WTC11 (cell line): ENCODE measurements at regions of chr2 and their contacts with region 1.

Region 1: DNA sequence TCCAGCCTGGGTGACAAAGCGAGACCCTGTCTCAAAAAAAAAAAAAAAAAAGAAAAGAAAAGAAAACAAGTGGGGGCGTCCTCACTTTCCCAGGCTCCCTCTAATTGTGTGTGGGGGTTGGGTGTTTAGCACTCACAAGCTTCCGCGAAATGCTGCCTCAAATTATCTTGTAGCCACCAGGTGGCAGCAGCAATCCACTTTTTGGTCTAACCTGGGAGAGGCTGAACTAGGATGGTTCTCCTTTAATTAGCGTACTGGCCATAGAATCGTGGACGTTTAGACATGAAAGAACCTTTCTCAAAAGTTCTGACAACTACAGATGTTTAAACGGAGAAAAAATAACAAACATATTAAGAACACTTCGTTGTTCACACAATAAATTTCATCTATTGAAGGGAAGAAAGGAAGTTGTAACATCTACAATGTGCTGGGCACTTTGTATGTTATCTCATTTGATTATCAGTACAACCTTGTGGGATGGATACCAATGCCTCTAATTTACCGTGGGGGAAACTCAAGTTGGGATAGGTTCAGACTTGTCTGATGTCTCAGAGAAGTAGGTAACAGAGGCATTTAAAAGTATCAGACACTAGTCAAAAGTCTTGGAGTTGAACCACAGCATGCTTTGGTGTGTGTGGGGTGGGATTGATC is 122.7 kb upstream of the NABP1 start:
- DNase-seq: peak; percentile 88
- ATAC-seq: peak; percentile 95
- H3K4me3 Mint-ChIP-seq: no peak overlapping the region
- H3K27ac Mint-ChIP-seq: no peak overlapping the region
- H3K4me1 Mint-ChIP-seq: peaks cover 19% of the 10 kb centered on the region
- H3K27me3 Mint-ChIP-seq: peaks cover 6% of the 10 kb centered on the region
- CTCF ChIP-seq: peak; percentile 38; the same call in 1 of the 2 replicates

Region 2: DNA sequence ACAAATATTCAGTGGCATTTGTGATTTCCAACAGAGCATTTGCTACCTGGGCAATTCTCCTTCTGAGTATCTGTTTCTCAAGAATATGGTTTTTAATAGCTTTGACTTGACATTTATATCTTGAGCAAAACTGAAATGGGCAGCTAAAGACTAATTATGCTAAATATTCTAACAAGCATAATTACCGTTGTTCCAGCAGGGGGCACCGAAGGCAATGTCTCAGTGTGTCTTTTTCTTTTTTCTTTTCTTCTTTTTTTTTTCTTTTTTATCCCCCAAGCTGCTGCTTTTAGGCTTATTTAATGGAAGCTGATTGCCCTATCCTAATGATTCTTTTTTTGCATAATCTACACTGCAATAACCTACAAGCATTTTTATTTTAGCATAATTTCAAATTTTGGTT is 16.1 kb before region 1 on chr2:
- CTCF ChIA-PET with region 1: interaction called, 44 read pairs
- POLR2A ChIA-PET with region 1: no interaction called
- DNase-seq: peak; percentile 41
- ATAC-seq: no peak
- H3K4me3 Mint-ChIP-seq: no peak overlapping the region
- H3K27ac Mint-ChIP-seq: no peak overlapping the region
- H3K4me1 Mint-ChIP-seq: peaks cover 25% of the 10 kb centered on the region
- H3K27me3 Mint-ChIP-seq: no peaks in the 10 kb centered on the region; the same call in 1 of the 2 replicates
- CTCF ChIP-seq: 0 out of 2 replicates have a peak, but pooled peaks have one; percentile 13

Region 3: GRCh38 chr2:191544461-191545062 is 10.7 kb before region 1 on chr2:
- CTCF ChIA-PET with region 1: interaction called, 44 read pairs
- POLR2A ChIA-PET with region 1: no interaction called
- DNase-seq: no peak
- ATAC-seq: no peak
- H3K4me3 Mint-ChIP-seq: no peak overlapping the region
- H3K27ac Mint-ChIP-seq: no peak overlapping the region
- H3K4me1 Mint-ChIP-seq: peaks cover 9% of the 10 kb centered on the region
- H3K27me3 Mint-ChIP-seq: no peaks in the 10 kb centered on the region
- CTCF ChIP-seq: no peak

Region 4: GRCh38 chr2:191566344-191566743 is 11.1 kb after region 1 on chr2:
- CTCF ChIA-PET with region 1: interaction called, 11 read pairs
- POLR2A ChIA-PET with region 1: no interaction called
- DNase-seq: peak; percentile 86
- ATAC-seq: peak; percentile 90
- H3K4me3 Mint-ChIP-seq: no peak overlapping the region
- H3K27ac Mint-ChIP-seq: no peak overlapping the region
- H3K4me1 Mint-ChIP-seq: peaks cover 9% of the 10 kb centered on the region
- H3K27me3 Mint-ChIP-seq: no peaks in the 10 kb centered on the region
- CTCF ChIP-seq: peak; percentile 54; the same call in 1 of the 2 replicates

Region 5: GRCh38 chr2:191811807-191812602 is 256.8 kb after region 1 on chr2:
- CTCF ChIA-PET with region 1: interaction called, 12 read pairs
- POLR2A ChIA-PET with region 1: no interaction called
- DNase-seq: peak; percentile 59
- ATAC-seq: peak; percentile 84
- H3K4me3 Mint-ChIP-seq: no peak overlapping the region
- H3K27ac Mint-ChIP-seq: no peak overlapping the region
- H3K4me1 Mint-ChIP-seq: 0 out of 2 replicates have a peak, but pooled peaks cover 2% of the 10 kb centered on the region
- H3K27me3 Mint-ChIP-seq: no peaks in the 10 kb centered on the region; the same call in 1 of the 2 replicates
- CTCF ChIP-seq: peak; percentile 36